ENCODE measurements at regions of chr18 and their contacts with region 1.

Region 1: DNA sequence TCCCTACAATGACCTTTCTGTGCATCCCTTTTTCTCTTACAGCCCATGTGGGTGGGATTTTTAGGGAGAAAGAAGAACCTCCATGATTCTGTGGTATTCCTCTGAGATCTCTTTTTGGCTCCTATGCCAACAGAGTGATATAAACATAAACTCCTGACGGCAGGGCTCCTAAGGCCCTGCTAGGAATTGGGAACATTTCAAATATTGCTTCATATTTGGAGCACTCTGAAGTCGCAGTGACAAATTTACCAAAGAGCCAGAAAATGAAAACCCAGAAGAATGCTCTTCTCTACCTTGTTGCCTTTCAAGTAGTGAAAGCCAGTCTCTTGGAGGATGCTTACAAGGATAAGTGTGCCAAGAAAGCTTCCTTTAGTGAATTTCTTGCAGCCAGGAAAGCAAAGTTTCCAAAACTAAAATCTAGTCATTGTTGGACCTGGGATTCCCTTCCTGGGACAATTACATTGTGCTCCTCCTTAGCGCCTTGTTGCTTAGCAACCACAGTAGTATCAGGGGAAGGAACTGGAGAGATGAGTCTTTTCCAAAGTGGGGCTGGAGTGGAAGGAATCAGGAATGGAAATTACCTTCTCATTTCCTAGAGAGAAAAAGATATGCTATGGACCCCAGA is 7.3 kb upstream of the SETBP1 start:
- DNase-seq: no peak
- H3K4me3 ChIP-seq: no peak overlapping the region
- H3K27ac ChIP-seq: no peak overlapping the region
- H3K4me1 ChIP-seq: peaks cover 13% of the 10 kb centered on the region
- H3K27me3 ChIP-seq: no peaks in the 10 kb centered on the region
- CTCF ChIP-seq: no peak

Region 2: GRCh38 chr18:44602380-44602779 is 71.0 kb before region 1 on chr18:
- CTCF ChIA-PET with region 1: no interaction called
- POLR2A ChIA-PET with region 1: interaction called, 3 read pairs
- intact Hi-C with region 1: loop called (anchors 2 kb)
- DNase-seq: peak in 1 of 2 experiments; percentile 57
- H3K4me3 ChIP-seq: no peak overlapping the region
- H3K27ac ChIP-seq: peak overlapping the region; percentile 70
- H3K4me1 ChIP-seq: peaks cover 22% of the 10 kb centered on the region
- H3K27me3 ChIP-seq: no peaks in the 10 kb centered on the region
- CTCF ChIP-seq: no peak

Measured in PC-9 (cell line).